Activated CD4-positive, alpha-beta T cell treated with anti-CD3 and anti-CD28 coated beads, Interleukin-2, amount 10 ng/mL, durations not matched to agents 7 days and 5 days (primary cell): ENCODE measurements at regions of chr2 and their contacts with region 1.

Region 1: DNA sequence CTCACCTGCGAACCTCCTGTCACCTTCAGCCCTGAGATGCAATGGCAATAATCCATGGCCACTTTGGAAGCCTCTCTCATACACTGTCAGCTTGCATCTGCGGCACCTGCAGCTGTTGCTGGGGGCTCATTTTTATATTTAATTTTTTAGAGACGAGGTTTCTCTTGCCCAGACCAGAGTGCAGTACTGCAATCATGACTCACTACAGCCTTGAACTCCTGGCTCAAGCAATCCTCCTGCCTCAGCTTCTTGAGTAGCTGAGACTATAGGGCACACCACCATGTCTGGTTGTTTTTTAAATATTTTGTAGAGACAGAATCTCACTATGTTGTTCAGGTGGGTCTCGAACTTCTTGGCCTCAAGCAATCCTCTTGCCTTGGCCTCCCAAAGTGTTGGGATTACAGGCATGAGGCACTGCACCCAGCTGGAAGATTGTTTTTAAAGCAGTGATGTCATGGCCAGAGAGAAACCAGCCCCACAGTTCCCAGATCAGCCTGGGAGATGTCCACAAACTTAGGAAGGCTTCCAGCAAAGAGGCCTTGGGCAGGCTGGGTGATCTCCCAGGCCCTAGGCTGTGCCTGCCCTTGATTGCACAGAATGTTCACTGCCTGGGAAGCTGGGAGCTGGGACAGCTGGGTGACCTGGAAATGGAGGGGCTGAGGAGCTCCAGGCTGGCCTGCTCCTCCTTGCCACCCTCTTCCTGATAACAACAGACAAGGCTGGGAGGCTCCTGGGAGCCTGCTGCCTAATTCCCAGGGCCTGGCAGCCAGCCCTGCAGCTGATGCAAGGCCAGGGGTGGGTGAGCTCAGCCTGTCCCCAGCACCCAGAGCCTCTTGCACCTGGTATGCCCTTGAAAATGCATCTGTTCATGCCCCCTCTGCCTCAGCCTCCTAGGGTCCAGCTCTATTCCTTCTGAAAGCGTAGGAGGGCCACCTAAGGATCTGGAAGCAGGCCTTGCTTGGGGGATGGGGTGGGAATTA is 27.1 kb downstream of the SH2D6 start:
- DNase-seq: no peak
- H3K4me3 Mint-ChIP-seq: no peak overlapping the region
- H3K27ac Mint-ChIP-seq: no peak overlapping the region
- H3K4me1 Mint-ChIP-seq: peaks cover 14% of the 10 kb centered on the region
- H3K27me3 Mint-ChIP-seq: no peaks in the 10 kb centered on the region

Region 2: DNA sequence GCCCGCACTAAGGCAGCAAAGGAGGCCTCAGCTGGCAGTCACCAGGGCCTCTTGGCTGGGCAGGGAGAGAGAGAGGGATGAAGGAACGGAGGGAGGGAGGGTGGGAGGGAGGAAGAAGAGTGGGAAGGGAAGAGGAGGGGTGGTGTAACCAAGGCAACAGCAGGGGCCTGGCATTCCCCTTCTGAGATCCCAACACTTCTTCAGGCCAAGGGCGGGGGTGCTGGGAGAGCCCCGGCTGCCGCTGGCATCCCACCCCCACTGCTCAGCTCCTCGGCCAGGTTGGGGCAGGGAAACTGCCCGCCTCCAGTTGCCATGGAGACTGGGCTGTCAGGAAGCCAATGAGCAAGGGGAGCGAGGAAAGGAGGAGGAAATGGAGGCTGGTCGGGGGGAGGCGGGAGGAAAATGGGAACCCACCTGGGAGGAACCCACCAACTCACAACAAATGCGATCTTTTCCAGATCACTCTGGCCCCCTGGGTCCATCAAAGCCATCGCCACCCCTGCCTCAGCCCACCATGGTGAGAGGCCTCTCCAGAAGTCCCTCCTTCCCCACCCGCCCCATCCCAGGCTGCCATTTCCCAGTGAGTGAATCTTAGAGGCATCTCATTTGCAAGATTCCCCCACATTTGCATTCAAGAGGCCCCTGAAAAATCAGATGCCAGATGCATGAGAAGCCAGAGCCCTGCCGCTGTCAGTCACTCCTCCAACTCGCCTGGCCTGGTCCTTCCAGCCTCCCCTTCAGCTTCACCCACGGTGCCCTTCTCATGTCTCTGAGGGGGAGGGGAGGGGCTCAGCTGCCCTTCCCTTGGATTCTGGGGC is 14.6 kb before region 1 on chr2:
- CTCF ChIA-PET with region 1: no interaction called
- POLR2A ChIA-PET with region 1: no interaction called
- DNase-seq: no peak
- H3K4me3 Mint-ChIP-seq: no peak overlapping the region
- H3K27ac Mint-ChIP-seq: no peak overlapping the region
- H3K4me1 Mint-ChIP-seq: peaks cover 7% of the 10 kb centered on the region
- H3K27me3 Mint-ChIP-seq: no peaks in the 10 kb centered on the region

Region 3: DNA sequence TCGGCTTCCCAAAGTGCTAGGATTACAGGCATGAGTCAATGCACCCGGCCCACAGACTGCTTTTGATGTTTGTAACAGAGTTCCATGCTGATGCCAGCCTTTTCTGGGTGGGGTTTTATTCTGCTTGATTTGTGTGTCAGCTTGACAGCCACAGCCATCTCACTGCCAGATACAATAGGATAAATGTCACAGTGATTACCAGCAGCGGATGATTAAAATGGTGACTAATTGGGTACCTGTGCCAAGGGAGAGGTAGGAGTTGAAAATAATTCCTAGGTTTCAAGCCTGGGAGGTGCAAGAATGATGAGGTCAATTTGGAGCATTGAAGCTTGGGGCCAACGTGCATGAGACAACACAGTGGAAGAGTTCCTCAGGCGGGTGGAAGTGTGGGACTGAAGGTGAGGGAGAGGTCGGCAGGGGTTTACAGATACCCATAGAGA is 12.3 kb after region 1 on chr2:
- CTCF ChIA-PET with region 1: interaction called, 10 read pairs
- POLR2A ChIA-PET with region 1: no interaction called
- DNase-seq: no peak
- H3K4me3 Mint-ChIP-seq: no peak overlapping the region
- H3K27ac Mint-ChIP-seq: no peak overlapping the region
- H3K4me1 Mint-ChIP-seq: no peaks in the 10 kb centered on the region
- H3K27me3 Mint-ChIP-seq: no peaks in the 10 kb centered on the region

Region 4: GRCh38 chr2:85504778-85505323 is 59.2 kb after region 1 on chr2:
- CTCF ChIA-PET with region 1: no interaction called
- POLR2A ChIA-PET with region 1: no interaction called
- DNase-seq: no peak
- H3K4me3 Mint-ChIP-seq: no peak overlapping the region
- H3K27ac Mint-ChIP-seq: no peak overlapping the region
- H3K4me1 Mint-ChIP-seq: no peaks in the 10 kb centered on the region
- H3K27me3 Mint-ChIP-seq: no peaks in the 10 kb centered on the region